CD4-positive, alpha-beta T cell (primary cell): ENCODE measurements at regions of chr5 and their contacts with region 1.

Region 1: GRCh38 chr5:6435356-6435755 is 13.3 kb upstream of the UBE2QL1 start:
- DNase-seq: peak in 3 of 14 experiments; percentile 19 to 30 (median 21)
- ATAC-seq: no peak
- H3K4me3 ChIP-seq: no peak overlapping the region
- H3K4me3 Mint-ChIP-seq: no peak overlapping the region
- H3K27ac ChIP-seq: no peak overlapping the region
- H3K27ac Mint-ChIP-seq: no peak overlapping the region
- H3K4me1 ChIP-seq: no peaks in the 10 kb centered on the region
- H3K4me1 Mint-ChIP-seq: no peaks in the 10 kb centered on the region
- H3K27me3 ChIP-seq: peaks cover 13 to 19% of the 10 kb centered on the region in 2 experiments
- H3K27me3 Mint-ChIP-seq: peaks cover 72% of the 10 kb centered on the region
- CTCF ChIP-seq: no peak

Region 2: GRCh38 chr5:6291961-6292360 is 143.4 kb before region 1 on chr5:
- CTCF ChIA-PET with region 1: no interaction called
- POLR2A ChIA-PET with region 1: no interaction called
- intact Hi-C with region 1: loop called in 1 of 2 experiments (anchors 5 kb)
- DNase-seq: peak in 4 of 14 experiments; percentile 19 to 49 (median 30)
- ATAC-seq: no peak
- H3K4me3 ChIP-seq: no peak overlapping the region
- H3K4me3 Mint-ChIP-seq: no peak overlapping the region
- H3K27ac ChIP-seq: no peak overlapping the region
- H3K27ac Mint-ChIP-seq: no peak overlapping the region
- H3K4me1 ChIP-seq: no peaks in the 10 kb centered on the region
- H3K4me1 Mint-ChIP-seq: no peaks in the 10 kb centered on the region
- H3K27me3 ChIP-seq: no peaks in the 10 kb centered on the region
- H3K27me3 Mint-ChIP-seq: peaks cover 10% of the 10 kb centered on the region
- CTCF ChIP-seq: peak; percentile 39